ENCODE measurements at regions of chr16 and their contacts with region 1.

Region 1: DNA sequence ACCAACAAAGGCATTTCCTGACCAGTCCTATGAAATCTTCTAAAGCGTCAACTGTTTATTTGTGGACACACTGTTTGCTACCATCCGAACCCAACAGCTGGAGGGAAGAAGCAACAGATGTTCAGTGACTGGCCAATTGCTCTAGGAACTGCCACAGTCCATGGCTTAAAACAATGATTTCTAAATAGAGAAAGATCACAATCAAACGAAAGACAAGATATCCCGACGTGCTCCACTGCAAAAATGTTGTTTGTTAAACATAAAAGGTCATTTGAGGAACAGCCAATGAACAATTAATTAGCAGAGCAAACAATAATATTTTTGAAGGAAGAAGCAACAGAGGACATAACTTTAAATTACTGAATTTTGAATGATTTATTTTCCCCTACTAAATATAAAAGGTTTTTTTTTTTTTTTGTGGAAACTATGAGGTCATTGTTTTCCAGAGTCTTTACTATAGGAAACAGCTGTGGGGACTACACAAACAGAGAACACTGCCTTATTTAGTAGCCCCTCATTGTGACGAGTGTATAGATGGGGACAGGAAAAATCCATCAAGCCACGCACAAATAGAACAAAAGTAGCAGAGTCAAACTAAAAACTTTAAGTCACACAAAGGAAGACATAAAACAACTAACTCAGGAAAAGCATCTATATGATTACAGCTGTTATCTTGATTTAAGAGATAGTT is 17.2 kb downstream of the USP31 start:
- DNase-seq: no peak
- ATAC-seq: peak in 6 of 8 donors; percentile 67 to 88 (median 78)
- H3K4me3 ChIP-seq: peak overlapping the region in 6 of 10 donors; percentile 15 to 49 (median 30)
- H3K27ac ChIP-seq: peak overlapping the region; percentile 64 to 91 (median 82)
- H3K4me1 ChIP-seq: peaks cover 0 to 67% (median 36%) of the 10 kb centered on the region in 9 donors
- H3K27me3 ChIP-seq: no peaks in the 10 kb centered on the region
- CTCF ChIP-seq: no peak

Region 2: DNA sequence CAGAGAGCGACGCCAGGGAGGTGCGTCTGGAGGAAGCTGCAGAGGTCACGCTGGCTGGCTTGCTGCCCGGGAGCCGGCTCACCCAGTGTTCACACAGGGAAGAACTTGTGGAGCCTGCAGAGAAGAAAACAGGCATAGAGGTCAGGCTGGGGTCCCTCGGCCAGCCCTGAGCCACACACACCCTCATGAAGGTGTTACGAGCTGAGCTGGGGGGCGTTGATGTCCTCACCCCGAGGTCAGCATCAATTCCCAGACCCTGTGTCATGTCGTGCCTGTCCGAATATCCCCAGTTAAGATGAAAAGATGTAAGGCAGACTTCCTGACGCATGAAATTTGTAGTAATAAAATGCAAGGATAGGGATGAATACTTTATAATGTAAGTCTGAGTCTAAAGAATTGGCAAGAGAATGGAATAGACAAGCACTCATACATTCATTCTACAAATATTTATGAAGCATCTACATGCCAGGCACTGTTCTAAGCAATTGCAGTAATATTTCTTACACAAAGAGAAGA is 59.9 kb before region 1 on chr16:
- intact Hi-C with region 1: loop called in 2 of 10 experiments (anchors 5 kb)
- DNase-seq: peak; percentile 90
- ATAC-seq: peak; percentile 80 to 93 (median 87)
- H3K4me3 ChIP-seq: peak overlapping the region in 3 of 10 donors; percentile 9 to 20 (median 13)
- H3K27ac ChIP-seq: peak overlapping the region; percentile 41 to 95 (median 83)
- H3K4me1 ChIP-seq: peaks cover 12 to 58% (median 45%) of the 10 kb centered on the region in 9 donors
- H3K27me3 ChIP-seq: no peaks in the 10 kb centered on the region
- CTCF ChIP-seq: no peak

Region 3: DNA sequence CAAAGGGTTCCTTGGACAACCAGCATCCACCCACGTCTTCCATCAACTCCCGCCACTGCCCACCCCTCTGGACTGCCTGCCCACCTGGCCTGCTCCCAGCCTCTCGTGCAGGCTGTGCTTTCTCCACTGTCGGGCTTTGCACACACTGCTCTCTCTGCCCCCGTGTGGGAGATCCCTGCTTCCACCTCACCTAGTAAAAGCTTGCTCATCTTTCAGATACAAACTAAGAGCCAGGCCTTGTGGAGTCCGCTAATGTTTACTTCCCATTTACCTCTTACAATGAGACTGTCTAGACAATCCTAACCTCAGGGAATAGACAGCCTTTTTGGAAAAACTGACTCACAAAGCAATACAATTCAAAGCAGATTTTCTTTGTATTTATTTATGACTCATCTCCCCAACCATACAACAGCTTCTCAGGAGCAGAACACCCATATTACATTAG is 50.4 kb before region 1 on chr16:
- intact Hi-C with region 1: loop called in 1 of 10 experiments (anchors 5 kb)
- DNase-seq: no peak
- ATAC-seq: peak in 6 of 8 donors; percentile 19 to 80 (median 58)
- H3K4me3 ChIP-seq: no peak overlapping the region
- H3K27ac ChIP-seq: peak overlapping the region in 2 of 10 donors; percentile 22 to 51
- H3K4me1 ChIP-seq: peaks cover 0 to 41% (median 8%) of the 10 kb centered on the region in 9 donors
- H3K27me3 ChIP-seq: no peaks in the 10 kb centered on the region
- CTCF ChIP-seq: no peak